Activated CD4-positive, alpha-beta memory T cell treated with anti-CD3 and anti-CD28 coated beads for 36 hours (primary cell): ENCODE measurements at regions of chr4 and their contacts with region 1.

Region 1: DNA sequence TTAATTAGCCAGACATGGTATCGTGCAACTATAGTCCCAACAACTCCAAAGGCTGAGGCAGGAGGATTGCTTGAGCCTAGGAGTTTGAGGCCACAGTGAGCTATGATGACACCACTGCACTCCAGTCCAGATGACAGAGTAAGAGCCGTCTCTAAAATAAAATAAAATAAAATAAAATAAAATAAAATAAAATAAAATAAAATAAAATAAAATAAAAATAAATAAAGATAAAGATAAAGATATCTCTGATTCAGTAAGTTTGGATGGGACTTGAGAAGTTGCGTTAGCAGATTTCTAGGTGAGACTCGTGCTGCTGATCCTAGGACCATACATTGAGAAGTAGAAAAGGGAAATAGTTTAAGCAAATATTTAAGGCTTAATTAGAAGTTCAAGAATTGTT is 254.8 kb upstream of the FAM241A start:
- DNase-seq: no peak
- H3K4me3 Mint-ChIP-seq: no peak overlapping the region
- H3K27ac Mint-ChIP-seq: no peak overlapping the region
- H3K4me1 Mint-ChIP-seq: no peaks in the 10 kb centered on the region
- H3K27me3 Mint-ChIP-seq: no peaks in the 10 kb centered on the region

Region 2: GRCh38 chr4:111330786-111331185 is 559.6 kb before region 1 on chr4:
- CTCF ChIA-PET with region 1: no interaction called
- POLR2A ChIA-PET with region 1: no interaction called
- intact Hi-C with region 1: loop called (anchors 10 kb)
- DNase-seq: no peak
- H3K4me3 Mint-ChIP-seq: no peak overlapping the region
- H3K27ac Mint-ChIP-seq: no peak overlapping the region
- H3K4me1 Mint-ChIP-seq: no peaks in the 10 kb centered on the region
- H3K27me3 Mint-ChIP-seq: no peaks in the 10 kb centered on the region

Region 3: DNA sequence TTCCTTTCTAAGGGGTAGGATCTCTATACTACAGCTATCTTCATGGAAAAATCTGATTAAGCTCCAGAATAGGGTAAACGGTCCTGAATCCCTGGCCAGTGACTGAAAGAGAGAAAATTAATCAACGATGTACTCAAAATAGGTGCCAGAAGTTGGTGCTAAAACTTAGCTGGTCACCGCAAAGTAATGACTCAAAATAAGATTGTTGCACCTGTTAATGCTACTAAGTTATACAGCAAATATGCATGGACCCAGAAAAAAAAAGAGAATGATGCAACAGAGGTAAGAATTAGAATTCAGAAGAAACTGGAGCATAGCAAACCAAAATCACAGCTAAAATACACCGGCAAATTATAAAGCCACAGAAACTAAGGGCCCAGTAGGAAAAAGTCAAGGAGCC is 15.1 kb after region 1 on chr4:
- CTCF ChIA-PET with region 1: no interaction called
- POLR2A ChIA-PET with region 1: no interaction called
- intact Hi-C with region 1: no loop called
- DNase-seq: no peak
- H3K4me3 Mint-ChIP-seq: no peak overlapping the region
- H3K27ac Mint-ChIP-seq: no peak overlapping the region
- H3K4me1 Mint-ChIP-seq: no peaks in the 10 kb centered on the region
- H3K27me3 Mint-ChIP-seq: no peaks in the 10 kb centered on the region